A549 (cell line): ENCODE measurements at regions of chr9 and their contacts with region 1.

Region 1: GRCh38 chr9:114691046-114691955 is 9.3 kb upstream of the TEX48 start:
- DNase-seq: peak; percentile 69 to 78
- ATAC-seq: peak; percentile 93 to 97
- H3K4me3 ChIP-seq: peak overlapping the region; percentile 6; the same call in 1 of the 3 replicates
- H3K27ac ChIP-seq: peak overlapping the region; percentile 74 to 82
- H3K4me1 ChIP-seq: peaks cover 31% of the 10 kb centered on the region
- CTCF ChIP-seq: no peak
- EP300 ChIP-seq: 0 out of 5 replicates have a peak, but pooled peaks of 1 of the 2 experiments have one; percentile 55
- POLR2A ChIP-seq: no peak
- RAD21 ChIP-seq: peak; percentile 16 to 25; a peak in 2 of 5 replicates

Region 2: GRCh38 chr9:114706711-114707110 is 15.4 kb after region 1 on chr9:
- CTCF ChIA-PET with region 1: interaction called, 12 read pairs
- POLR2A ChIA-PET with region 1: interaction called, 3 read pairs
- DNase-seq: no peak
- ATAC-seq: no peak
- H3K4me3 ChIP-seq: no peak overlapping the region
- H3K27ac ChIP-seq: no peak overlapping the region
- H3K4me1 ChIP-seq: no peaks in the 10 kb centered on the region
- CTCF ChIP-seq: no peak
- EP300 ChIP-seq: no peak
- POLR2A ChIP-seq: no peak
- RAD21 ChIP-seq: no peak

Region 3: DNA sequence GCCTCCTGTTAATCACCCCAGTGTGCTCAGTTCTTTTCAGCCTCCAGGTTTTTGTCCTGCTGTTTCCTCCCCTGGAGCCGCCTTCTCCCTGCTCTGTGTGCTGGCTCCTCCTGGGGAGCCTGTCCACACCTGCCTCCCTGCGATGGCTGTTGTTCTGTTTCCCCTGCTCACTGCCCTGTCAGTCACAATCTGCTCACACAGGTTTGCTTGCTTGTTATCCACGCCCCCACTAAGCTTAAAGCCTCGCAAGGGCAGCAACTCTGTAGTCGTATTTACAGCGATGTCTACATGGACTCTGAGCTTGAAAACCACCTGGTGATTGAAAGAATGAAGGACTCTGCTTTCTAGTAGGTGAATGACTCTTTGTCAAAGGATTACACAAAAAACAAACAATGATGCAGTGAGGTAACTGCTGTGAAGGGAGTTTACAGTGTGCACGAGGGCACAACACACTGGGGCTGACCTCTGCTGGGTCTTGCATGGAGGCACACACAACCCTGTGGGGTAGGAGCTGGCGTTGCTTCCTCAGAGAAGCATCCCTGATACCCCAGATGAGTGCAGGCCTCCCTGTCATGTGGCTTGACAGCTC is 30.3 kb after region 1 on chr9:
- CTCF ChIA-PET with region 1: interaction called, 14 read pairs
- POLR2A ChIA-PET with region 1: no interaction called
- DNase-seq: peak; percentile 15 to 48
- ATAC-seq: peak; percentile 73 to 74; a peak in 5 of 6 replicates
- H3K4me3 ChIP-seq: no peak overlapping the region
- H3K27ac ChIP-seq: 0 out of 6 replicates have a peak overlapping the region, but pooled peaks have one; percentile 1 to 30
- H3K4me1 ChIP-seq: peaks cover 17% of the 10 kb centered on the region
- CTCF ChIP-seq: no peak
- EP300 ChIP-seq: no peak
- POLR2A ChIP-seq: no peak
- RAD21 ChIP-seq: no peak